HepG2 (cell line): ENCODE measurements at regions of chr7 and their contacts with region 1.

Region 1: DNA sequence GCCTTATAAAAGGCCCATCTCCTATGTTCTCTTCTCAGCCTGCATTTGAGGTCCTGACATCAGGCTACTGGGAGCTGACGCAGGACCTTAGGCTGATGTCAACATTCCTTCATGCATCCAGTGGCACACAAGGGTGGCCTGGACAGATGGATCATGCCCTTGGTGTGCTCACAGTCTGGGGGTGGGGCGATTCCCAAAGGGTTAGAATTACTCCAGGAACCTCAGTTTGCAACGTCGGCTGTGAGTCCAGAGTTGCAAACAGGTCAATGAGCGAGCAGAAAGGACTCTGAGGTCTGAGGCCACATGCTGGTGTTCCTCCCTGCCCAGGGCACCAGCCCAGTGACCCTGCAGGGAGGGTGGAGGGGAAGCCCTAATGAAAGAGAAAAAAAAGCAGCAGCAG is 8.2 kb upstream of the CLIP2 start:
- DNase-seq: no peak
- ATAC-seq: peak; percentile 22
- H3K4me3 ChIP-seq: no peak overlapping the region; a peak in 1 of 6 replicates
- H3K27ac ChIP-seq: no peak overlapping the region
- H3K4me1 ChIP-seq: peaks cover 53% of the 10 kb centered on the region
- H3K27me3 ChIP-seq: peaks cover 0 to 12% of the 10 kb centered on the region in 2 experiments; a peak in 2 of 5 replicates
- CTCF ChIP-seq: no peak
- EP300 ChIP-seq: no peak
- POLR2A ChIP-seq: no peak
- RAD21 ChIP-seq: no peak

Region 2: GRCh38 chr7:73593207-73594045 is 687.6 kb before region 1 on chr7:
- CTCF ChIA-PET with region 1: no interaction called
- POLR2A ChIA-PET with region 1: no interaction called
- in situ Hi-C with region 1: no loop called
- intact Hi-C with region 1: no loop called
- DNase-seq: no peak
- ATAC-seq: peak; percentile 2
- H3K4me3 ChIP-seq: no peak overlapping the region
- H3K27ac ChIP-seq: no peak overlapping the region
- H3K4me1 ChIP-seq: no peaks in the 10 kb centered on the region
- H3K27me3 ChIP-seq: no peaks in the 10 kb centered on the region
- CTCF ChIP-seq: no peak
- EP300 ChIP-seq: no peak
- POLR2A ChIP-seq: peak in 1 of 2 experiments; percentile 57; a peak in 3 of 4 replicates
- RAD21 ChIP-seq: no peak

Region 3: DNA sequence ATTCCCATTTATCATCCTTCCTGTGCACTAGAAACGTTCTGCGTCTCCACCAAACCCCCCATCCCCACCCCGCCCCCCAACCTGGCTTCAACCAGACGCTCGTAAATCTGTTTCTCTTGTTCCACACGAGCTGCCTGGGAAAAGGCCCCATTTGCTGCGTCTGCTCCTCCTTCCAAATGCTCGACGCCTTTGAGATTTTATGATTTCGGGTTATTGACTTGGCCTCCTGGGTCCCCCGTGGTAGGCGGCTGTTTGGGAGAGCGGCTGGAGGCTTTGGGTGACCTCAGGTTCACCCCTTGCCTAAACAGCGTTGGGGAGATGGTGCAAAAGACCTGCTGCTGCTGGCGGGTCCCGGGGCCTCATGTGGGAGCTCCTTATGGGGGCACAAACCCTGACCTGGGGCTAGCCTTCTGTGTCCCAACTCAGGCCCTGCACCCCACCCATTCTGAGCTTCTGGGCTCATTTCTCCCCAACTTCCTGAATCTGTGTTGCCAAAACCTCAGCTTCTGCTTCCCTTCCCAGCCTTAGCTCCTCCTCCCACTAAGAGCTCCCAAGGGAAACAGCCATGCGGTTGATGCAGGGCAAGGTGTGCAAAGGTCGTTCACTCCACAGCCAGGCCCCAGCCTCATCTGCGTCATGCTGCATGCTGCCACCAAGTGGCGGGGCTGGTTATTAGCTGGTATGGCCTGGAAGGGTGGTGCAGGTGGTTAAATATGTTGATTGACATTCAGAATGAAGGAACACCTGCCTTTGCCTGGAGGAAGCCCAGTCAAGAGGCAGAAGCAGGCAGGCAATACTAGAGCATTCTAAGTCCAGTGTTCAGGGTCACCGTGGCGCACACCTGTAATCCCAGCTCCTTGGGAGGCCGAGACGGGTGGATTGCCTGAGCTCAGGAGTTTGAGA is 302.1 kb before region 1 on chr7:
- CTCF ChIA-PET with region 1: no interaction called
- POLR2A ChIA-PET with region 1: no interaction called
- in situ Hi-C with region 1: no loop called
- intact Hi-C with region 1: no loop called
- DNase-seq: peak; percentile 89
- ATAC-seq: peak; percentile 84
- H3K4me3 ChIP-seq: no peak overlapping the region
- H3K27ac ChIP-seq: no peak overlapping the region
- H3K4me1 ChIP-seq: peaks cover 39% of the 10 kb centered on the region
- H3K27me3 ChIP-seq: peaks cover 1 to 6% of the 10 kb centered on the region in 2 experiments; a peak in 2 of 5 replicates
- CTCF ChIP-seq: peak; percentile 91
- EP300 ChIP-seq: peak in 1 of 2 experiments; percentile 42; a peak in 2 of 4 replicates
- POLR2A ChIP-seq: no peak
- RAD21 ChIP-seq: peak; percentile 77

Region 4: GRCh38 chr7:74246497-74246896 is 34.5 kb before region 1 on chr7:
- CTCF ChIA-PET with region 1: no interaction called
- POLR2A ChIA-PET with region 1: no interaction called
- in situ Hi-C with region 1: no loop called
- intact Hi-C with region 1: no loop called
- DNase-seq: no peak
- ATAC-seq: no peak
- H3K4me3 ChIP-seq: no peak overlapping the region
- H3K27ac ChIP-seq: no peak overlapping the region
- H3K4me1 ChIP-seq: peaks cover 20% of the 10 kb centered on the region
- H3K27me3 ChIP-seq: no peaks in the 10 kb centered on the region
- CTCF ChIP-seq: no peak
- EP300 ChIP-seq: no peak
- POLR2A ChIP-seq: no peak
- RAD21 ChIP-seq: no peak

Region 5: DNA sequence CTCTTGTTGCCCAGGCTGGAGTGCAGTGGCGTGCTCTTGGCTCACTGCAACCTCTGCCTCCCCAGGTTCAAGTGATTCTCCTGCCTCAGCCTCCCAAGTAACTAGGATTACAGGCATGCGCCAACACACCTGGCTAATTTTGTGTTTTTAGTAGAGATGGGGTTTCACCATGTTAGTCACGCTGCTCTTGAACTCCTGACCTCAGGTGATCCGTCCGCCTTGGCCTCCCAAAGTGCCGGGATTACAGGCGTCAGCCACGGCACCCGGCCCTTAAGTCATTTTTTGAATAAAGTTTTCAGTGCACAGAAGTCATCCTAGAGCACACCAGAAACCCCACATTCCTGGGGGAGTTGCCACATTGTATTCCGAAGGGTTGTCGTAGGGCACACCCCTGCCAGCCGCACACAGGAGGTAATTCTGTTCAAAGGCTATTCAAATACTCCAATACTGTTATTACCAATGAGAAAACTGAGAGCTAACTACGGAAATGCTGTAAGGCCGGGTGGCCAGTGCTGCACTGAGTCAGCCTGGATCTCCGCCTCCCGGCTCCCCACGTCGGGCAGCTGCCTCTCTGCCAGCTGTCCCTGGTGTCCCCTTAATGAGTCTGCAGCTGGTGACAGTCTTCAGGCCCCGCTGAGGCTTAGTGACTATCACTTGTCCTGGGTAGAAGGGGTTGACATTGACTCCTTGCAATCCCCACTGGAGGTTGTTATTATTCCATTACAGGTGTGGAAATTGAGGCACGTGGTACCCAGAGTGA is 18.2 kb before region 1 on chr7:
- CTCF ChIA-PET with region 1: no interaction called
- POLR2A ChIA-PET with region 1: interaction called, 60 read pairs
- in situ Hi-C with region 1: no loop called
- intact Hi-C with region 1: no loop called
- DNase-seq: peak; percentile 42
- ATAC-seq: peak; percentile 78
- H3K4me3 ChIP-seq: peak overlapping the region; percentile 22 to 65 (median 49)
- H3K27ac ChIP-seq: peak overlapping the region; percentile 45
- H3K4me1 ChIP-seq: peaks cover 77% of the 10 kb centered on the region
- H3K27me3 ChIP-seq: no peaks in the 10 kb centered on the region
- CTCF ChIP-seq: no peak
- EP300 ChIP-seq: no peak
- POLR2A ChIP-seq: no peak
- RAD21 ChIP-seq: no peak

Region 6: GRCh38 chr7:74709880-74710671 is 429.0 kb after region 1 on chr7:
- CTCF ChIA-PET with region 1: no interaction called
- POLR2A ChIA-PET with region 1: no interaction called
- in situ Hi-C with region 1: no loop called
- intact Hi-C with region 1: no loop called
- DNase-seq: no peak
- ATAC-seq: peak; percentile 67
- H3K4me3 ChIP-seq: no peak overlapping the region
- H3K27ac ChIP-seq: no peak overlapping the region
- H3K4me1 ChIP-seq: peaks cover 11% of the 10 kb centered on the region
- H3K27me3 ChIP-seq: no peaks in the 10 kb centered on the region
- CTCF ChIP-seq: peak; percentile 25; the same call in 1 of the 2 replicates
- EP300 ChIP-seq: no peak
- POLR2A ChIP-seq: no peak
- RAD21 ChIP-seq: no peak